ENCODE measurements at regions of chr1 and their contacts with region 1.

Region 1: DNA sequence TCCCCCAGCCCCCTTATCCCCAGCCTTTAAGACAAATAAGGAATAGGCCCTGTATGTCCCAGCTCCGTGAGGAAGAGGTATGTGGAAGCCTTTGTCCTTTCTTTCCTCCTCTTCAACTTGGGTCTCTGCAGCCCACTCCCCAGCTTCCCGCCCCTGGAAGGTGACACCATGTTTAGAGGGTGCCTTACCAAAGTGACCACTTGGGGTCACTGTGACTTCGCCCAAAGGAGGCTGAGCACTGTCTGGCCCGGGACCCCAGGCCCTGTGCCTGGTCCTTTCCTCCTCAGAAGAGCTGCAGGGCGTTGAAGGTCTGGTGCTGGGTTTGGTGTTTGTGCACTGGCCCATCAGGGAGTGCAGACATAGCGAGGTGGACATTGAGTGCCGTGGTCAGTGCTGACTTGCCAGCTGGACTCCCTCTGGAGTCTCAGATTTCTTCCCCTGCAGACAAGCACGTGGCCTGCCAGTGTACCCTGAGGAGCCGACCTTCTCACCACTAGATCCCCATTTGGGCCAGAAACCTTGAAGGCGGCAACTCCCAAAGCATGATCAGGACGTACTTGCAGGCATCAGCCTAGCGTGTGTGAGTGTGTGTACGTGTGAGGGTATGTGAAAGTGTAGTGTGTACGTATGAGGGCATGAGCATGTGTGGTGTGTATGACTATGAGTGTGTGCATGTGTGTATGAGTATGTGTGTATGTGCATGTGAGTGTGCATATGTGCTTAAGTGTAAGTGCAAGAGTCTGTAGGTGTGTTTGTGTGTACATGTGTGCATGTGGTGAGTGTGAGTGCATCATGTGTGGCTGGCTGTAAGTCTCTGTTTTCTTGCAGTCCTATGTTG is 181.4 kb upstream of the KIAA0040 start:
- DNase-seq: peak; percentile 11 to 71
- H3K4me3 ChIP-seq: no peak overlapping the region
- H3K4me1 ChIP-seq: no peaks in the 10 kb centered on the region
- H3K27me3 ChIP-seq: no peaks in the 10 kb centered on the region

Region 2: GRCh38 chr1:175887981-175888433 is 514.0 kb after region 1 on chr1:
- in situ Hi-C with region 1: loop called (anchors 25 kb)
- DNase-seq: peak; percentile 51 to 80
- H3K4me3 ChIP-seq: no peak overlapping the region
- H3K4me1 ChIP-seq: no peaks in the 10 kb centered on the region
- H3K27me3 ChIP-seq: no peaks in the 10 kb centered on the region

Region 3: GRCh38 chr1:176066709-176067108 is 692.7 kb after region 1 on chr1:
- in situ Hi-C with region 1: loop called (anchors 5 kb)
- DNase-seq: no peak
- H3K4me3 ChIP-seq: no peak overlapping the region
- H3K4me1 ChIP-seq: no peaks in the 10 kb centered on the region
- H3K27me3 ChIP-seq: no peaks in the 10 kb centered on the region